ENCODE measurements at regions of chr15 and their contacts with region 1.

Region 1: DNA sequence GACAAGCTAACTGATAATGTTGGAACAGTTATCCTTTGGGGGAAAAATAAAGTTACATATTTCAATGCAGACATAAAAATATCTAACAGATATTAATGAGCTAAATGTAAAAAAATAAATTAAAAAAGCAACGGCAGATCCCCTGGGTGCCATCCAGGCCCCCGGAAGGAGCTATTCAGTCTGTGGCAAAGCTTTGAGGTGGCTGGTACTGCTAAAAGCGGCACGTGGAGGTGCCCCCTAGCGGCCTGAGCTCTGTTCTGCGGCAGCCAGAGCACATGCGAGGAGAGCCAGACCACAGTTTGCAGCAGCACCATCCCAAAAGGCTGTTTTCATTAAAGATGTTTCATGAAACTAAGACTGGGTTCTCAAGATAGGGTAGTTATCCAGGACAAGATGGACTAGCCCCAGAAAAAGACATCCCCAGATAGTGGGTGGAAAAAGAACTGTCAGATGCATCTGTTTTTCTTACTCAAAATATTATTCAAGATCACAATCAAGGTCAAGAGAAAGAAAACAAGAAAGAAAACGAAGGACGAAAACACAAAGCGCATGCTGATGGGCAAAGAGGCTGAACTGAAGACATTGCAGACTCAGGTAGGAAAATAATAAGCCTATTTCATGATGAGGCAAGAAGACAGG is 18.7 kb downstream of the AP3S2 start:
- DNase-seq: no peak
- H3K4me3 ChIP-seq: no peak overlapping the region
- H3K27ac ChIP-seq: no peak overlapping the region
- H3K27me3 ChIP-seq: no peaks in the 10 kb centered on the region
- CTCF ChIP-seq: peak; percentile 98

Region 2: DNA sequence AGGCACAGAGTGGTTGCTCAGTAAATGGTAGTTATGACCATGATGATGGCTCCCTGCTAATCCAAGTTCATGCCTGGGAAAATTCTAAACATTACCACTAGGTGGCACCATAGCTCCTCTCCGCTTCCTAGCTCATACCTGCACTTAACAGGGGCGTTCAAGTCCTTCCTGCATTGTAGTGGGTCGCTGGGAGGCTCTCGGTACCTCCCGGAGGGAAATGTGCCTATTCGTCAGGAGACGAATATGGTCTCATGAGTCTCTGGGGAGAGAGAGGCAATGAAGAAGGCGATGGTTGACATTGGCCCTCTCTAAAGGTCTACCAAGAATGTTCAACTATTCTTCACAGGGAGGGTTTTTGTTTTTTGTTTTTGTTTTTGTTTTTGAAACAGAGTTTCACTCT is 134.9 kb before region 1 on chr15:
- CTCF ChIA-PET with region 1: interaction called, 64 read pairs
- POLR2A ChIA-PET with region 1: no interaction called
- DNase-seq: peak; percentile 53
- H3K4me3 ChIP-seq: no peak overlapping the region
- H3K27ac ChIP-seq: no peak overlapping the region
- H3K27me3 ChIP-seq: peaks cover 22% of the 10 kb centered on the region
- CTCF ChIP-seq: peak; percentile 90

Region 3: GRCh38 chr15:89768060-89768500 is 107.0 kb before region 1 on chr15:
- CTCF ChIA-PET with region 1: interaction called, 498 read pairs
- POLR2A ChIA-PET with region 1: no interaction called
- DNase-seq: no peak
- H3K4me3 ChIP-seq: no peak overlapping the region
- H3K27ac ChIP-seq: no peak overlapping the region
- H3K27me3 ChIP-seq: no peaks in the 10 kb centered on the region
- CTCF ChIP-seq: no peak

Region 4: GRCh38 chr15:89794627-89795241 is 80.3 kb before region 1 on chr15:
- CTCF ChIA-PET with region 1: interaction called, 18 read pairs
- POLR2A ChIA-PET with region 1: no interaction called
- DNase-seq: no peak
- H3K4me3 ChIP-seq: no peak overlapping the region
- H3K27ac ChIP-seq: peak overlapping the region; percentile 2
- H3K27me3 ChIP-seq: no peaks in the 10 kb centered on the region
- CTCF ChIP-seq: no peak

Region 5: GRCh38 chr15:89836255-89837133 is 38.6 kb before region 1 on chr15:
- CTCF ChIA-PET with region 1: interaction called, 32 read pairs
- POLR2A ChIA-PET with region 1: interaction called, 4 read pairs
- DNase-seq: peak; percentile 84
- H3K4me3 ChIP-seq: peak overlapping the region; percentile 25
- H3K27ac ChIP-seq: peak overlapping the region; percentile 94
- H3K27me3 ChIP-seq: no peaks in the 10 kb centered on the region
- CTCF ChIP-seq: no peak

Region 6: GRCh38 chr15:89863918-89864317 is 11.1 kb before region 1 on chr15:
- CTCF ChIA-PET with region 1: interaction called, 55 read pairs
- POLR2A ChIA-PET with region 1: no interaction called
- DNase-seq: no peak
- H3K4me3 ChIP-seq: no peak overlapping the region
- H3K27ac ChIP-seq: no peak overlapping the region
- H3K27me3 ChIP-seq: no peaks in the 10 kb centered on the region
- CTCF ChIP-seq: no peak

Region 7: GRCh38 chr15:89936051-89936785 is 61.2 kb after region 1 on chr15:
- CTCF ChIA-PET with region 1: no interaction called
- POLR2A ChIA-PET with region 1: no interaction called
- DNase-seq: no peak
- H3K4me3 ChIP-seq: no peak overlapping the region
- H3K27ac ChIP-seq: no peak overlapping the region
- H3K27me3 ChIP-seq: peaks cover 12% of the 10 kb centered on the region
- CTCF ChIP-seq: no peak

Measured in AG04450 (cell line).